SK-N-SH (cell line): ENCODE measurements at regions of chr9 and their contacts with region 1.

Region 1: GRCh38 chr9:91422758-91423711 is 597 bp downstream of the NFIL3 start:
- DNase-seq: no peak
- H3K4me3 ChIP-seq: peak overlapping the region; percentile 77 to 94
- H3K27ac ChIP-seq: peak overlapping the region; percentile 76 to 85
- H3K4me1 ChIP-seq: peaks cover 6 to 17% of the 10 kb centered on the region in 2 experiments
- H3K27me3 ChIP-seq: no peaks in the 10 kb centered on the region
- CTCF ChIP-seq: peak; percentile 28
- EP300 ChIP-seq: no peak
- RAD21 ChIP-seq: no peak

Region 2: GRCh38 chr9:91036826-91037510 is 386.1 kb before region 1 on chr9:
- CTCF ChIA-PET with region 1: interaction called, 42 read pairs
- POLR2A ChIA-PET with region 1: interaction called, 4 read pairs
- DNase-seq: peak; percentile 88
- H3K4me3 ChIP-seq: peak overlapping the region in 1 of 2 experiments; percentile 19; a peak in 1 of 4 replicates
- H3K27ac ChIP-seq: peak overlapping the region; percentile 54 to 60
- H3K4me1 ChIP-seq: peaks cover 14% of the 10 kb centered on the region in 2 experiments; a peak in 3 of 4 replicates
- H3K27me3 ChIP-seq: no peaks in the 10 kb centered on the region
- CTCF ChIP-seq: peak; percentile 79
- EP300 ChIP-seq: no peak
- RAD21 ChIP-seq: peak; percentile 89

Region 3: GRCh38 chr9:91433180-91433579 is 10.1 kb after region 1 on chr9:
- CTCF ChIA-PET with region 1: interaction called, 26 read pairs
- POLR2A ChIA-PET with region 1: no interaction called
- DNase-seq: peak; percentile 30
- H3K4me3 ChIP-seq: no peak overlapping the region
- H3K27ac ChIP-seq: peak overlapping the region in 1 of 2 experiments; percentile 35; a peak in 1 of 4 replicates
- H3K4me1 ChIP-seq: no peaks in the 10 kb centered on the region
- H3K27me3 ChIP-seq: no peaks in the 10 kb centered on the region
- CTCF ChIP-seq: peak; percentile 63
- EP300 ChIP-seq: no peak; a peak in 1 of 4 replicates
- RAD21 ChIP-seq: peak; percentile 67

Region 4: DNA sequence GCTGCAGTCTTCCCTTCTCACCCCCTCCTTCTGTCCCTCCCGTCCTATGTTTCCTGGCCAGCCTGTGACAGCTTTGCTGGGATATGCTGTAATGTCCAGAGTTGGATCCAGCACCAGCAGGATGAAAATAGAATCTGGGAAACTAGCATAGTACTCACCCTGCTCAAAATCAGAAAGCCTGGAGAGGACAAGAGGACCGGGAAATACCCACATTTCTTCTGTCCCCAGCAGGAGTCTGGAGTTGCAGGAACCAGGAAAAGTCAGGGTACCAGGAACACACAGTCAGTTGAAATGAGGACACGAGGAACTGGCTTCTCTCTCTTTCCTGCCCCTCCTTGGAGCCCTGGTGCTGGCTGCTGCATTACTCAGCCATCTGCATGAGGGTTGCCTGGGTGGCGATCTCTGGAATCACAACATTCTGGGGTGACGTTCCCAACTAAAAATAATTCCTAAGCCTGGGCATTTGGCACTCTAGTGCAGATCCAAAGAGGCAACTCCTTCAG is 60.2 kb after region 1 on chr9:
- CTCF ChIA-PET with region 1: no interaction called
- POLR2A ChIA-PET with region 1: no interaction called
- DNase-seq: no peak
- H3K4me3 ChIP-seq: no peak overlapping the region
- H3K27ac ChIP-seq: peak overlapping the region in 1 of 2 experiments; percentile 90; a peak in 2 of 4 replicates
- H3K4me1 ChIP-seq: peaks cover 0 to 3% of the 10 kb centered on the region in 2 experiments; a peak in 1 of 4 replicates
- H3K27me3 ChIP-seq: no peaks in the 10 kb centered on the region
- CTCF ChIP-seq: no peak
- EP300 ChIP-seq: no peak
- RAD21 ChIP-seq: no peak

Region 5: DNA sequence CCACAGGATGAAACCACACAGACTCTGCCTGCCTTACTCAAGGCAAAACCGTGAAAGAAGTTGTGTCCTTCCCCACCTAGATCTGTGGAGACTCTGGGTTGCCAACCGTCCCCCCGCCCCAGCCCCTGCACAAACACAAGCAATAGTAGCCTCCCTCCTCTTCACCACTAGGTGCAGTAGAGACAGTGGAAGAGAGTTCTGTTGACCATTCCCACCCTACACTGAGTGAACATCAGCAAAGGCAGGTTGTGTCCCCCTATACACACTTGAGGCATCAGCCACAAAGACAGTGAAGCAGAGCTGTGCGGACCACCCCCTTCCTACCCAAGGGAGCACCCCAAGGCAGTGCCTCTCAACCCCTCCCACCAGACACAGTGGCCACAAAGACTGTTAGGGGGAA is 224.3 kb after region 1 on chr9:
- CTCF ChIA-PET with region 1: no interaction called
- POLR2A ChIA-PET with region 1: no interaction called
- DNase-seq: no peak
- H3K4me3 ChIP-seq: no peak overlapping the region
- H3K27ac ChIP-seq: no peak overlapping the region
- H3K4me1 ChIP-seq: no peaks in the 10 kb centered on the region
- H3K27me3 ChIP-seq: no peaks in the 10 kb centered on the region
- CTCF ChIP-seq: no peak
- EP300 ChIP-seq: no peak
- RAD21 ChIP-seq: no peak